H1 (cell line): ENCODE measurements at regions of chr18 and their contacts with region 1.

Region 1: GRCh38 chr18:48797841-48798255 is 152.9 kb downstream of the SMAD7 start:
- DNase-seq: no peak
- H3K4me3 ChIP-seq: no peak overlapping the region
- H3K27ac ChIP-seq: no peak overlapping the region
- H3K4me1 ChIP-seq: no peaks in the 10 kb centered on the region
- H3K27me3 ChIP-seq: no peaks in the 10 kb centered on the region; a peak in 1 of 7 replicates
- CTCF ChIP-seq: no peak
- EP300 ChIP-seq: no peak
- POLR2A ChIP-seq: no peak
- RAD21 ChIP-seq: no peak

Region 2: GRCh38 chr18:48504819-48505218 is 293.0 kb before region 1 on chr18:
- CTCF ChIA-PET with region 1: no interaction called
- POLR2A ChIA-PET with region 1: no interaction called
- DNase-seq: no peak
- H3K4me3 ChIP-seq: no peak overlapping the region
- H3K27ac ChIP-seq: no peak overlapping the region
- H3K4me1 ChIP-seq: no peaks in the 10 kb centered on the region
- H3K27me3 ChIP-seq: no peaks in the 10 kb centered on the region
- CTCF ChIP-seq: no peak
- EP300 ChIP-seq: no peak
- POLR2A ChIP-seq: no peak
- RAD21 ChIP-seq: no peak

Region 3: DNA sequence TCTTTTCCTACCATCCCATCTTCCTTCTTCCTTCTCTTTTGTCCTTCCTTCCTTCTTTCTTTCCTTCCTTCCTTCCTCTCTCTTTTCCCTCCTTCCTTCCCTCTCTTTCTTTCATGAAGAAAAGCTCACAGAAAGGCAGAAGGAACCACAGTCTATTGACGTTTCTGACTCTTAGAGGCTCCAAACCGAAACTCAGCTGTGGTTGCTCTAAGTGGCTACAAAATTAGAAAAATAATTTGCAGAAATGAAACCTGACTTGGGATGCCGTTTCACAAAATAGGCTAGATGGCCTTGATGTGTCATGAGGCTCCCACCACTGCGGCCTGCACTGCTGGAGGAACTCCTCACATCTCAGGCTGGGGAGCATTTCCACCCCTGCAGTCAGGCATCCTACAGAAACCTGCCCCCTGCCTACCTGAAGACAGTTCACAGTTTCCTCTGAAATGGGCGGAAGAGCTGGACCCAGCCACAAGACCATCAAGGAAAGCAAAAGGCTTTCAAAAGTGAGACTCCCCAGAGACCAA is 12.7 kb before region 1 on chr18:
- CTCF ChIA-PET with region 1: interaction called, 17 read pairs
- POLR2A ChIA-PET with region 1: interaction called, 3 read pairs
- DNase-seq: no peak
- H3K4me3 ChIP-seq: no peak overlapping the region
- H3K27ac ChIP-seq: no peak overlapping the region
- H3K4me1 ChIP-seq: peaks cover 0 to 5% (median 1%) of the 10 kb centered on the region in 4 experiments; a peak in 2 of 7 replicates
- H3K27me3 ChIP-seq: no peaks in the 10 kb centered on the region
- CTCF ChIP-seq: no peak
- EP300 ChIP-seq: no peak
- POLR2A ChIP-seq: no peak
- RAD21 ChIP-seq: no peak

Region 4: DNA sequence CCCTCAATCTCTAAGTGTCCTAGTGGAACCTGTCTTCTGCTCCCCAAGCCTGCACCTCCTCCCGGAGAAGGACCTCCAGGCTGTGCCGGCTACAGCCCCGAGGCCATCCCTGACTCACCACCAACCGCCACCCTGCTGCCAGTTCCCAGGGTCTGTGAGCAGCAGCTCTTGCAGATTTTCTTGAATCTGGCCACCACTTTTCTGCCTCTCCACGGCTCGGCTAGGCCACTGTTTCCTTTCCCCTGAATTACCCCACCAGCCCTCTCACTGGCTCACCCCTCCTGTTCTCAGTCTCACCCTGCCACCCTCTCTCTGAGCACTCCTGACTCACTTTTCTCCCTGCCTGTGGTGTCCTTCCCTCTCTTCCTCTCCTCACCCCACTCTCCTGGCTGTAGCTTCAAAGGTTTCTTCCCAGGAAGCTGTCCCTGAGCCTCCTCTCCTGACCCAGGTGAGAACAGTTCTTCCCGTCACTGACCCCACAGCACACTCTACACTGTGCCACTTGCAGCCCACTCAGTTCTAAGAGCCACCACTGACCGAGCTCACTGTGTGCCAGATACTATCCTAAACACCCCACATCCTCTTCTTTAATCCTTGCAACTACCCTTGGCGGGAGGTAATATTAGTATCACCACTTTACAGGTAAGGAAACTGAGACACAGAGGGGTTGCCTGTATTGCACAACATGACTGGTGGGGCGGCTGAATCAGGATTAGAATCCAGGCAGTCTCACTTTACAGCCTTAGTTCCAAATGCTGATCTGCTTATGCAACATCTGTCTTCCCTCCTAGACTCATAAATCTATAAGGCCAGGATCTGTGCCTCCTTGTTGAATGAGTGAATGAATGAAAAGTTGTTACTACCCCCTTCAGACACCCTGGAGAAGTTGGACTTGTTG is 41.3 kb after region 1 on chr18:
- CTCF ChIA-PET with region 1: no interaction called
- POLR2A ChIA-PET with region 1: no interaction called
- DNase-seq: no peak
- H3K4me3 ChIP-seq: no peak overlapping the region
- H3K27ac ChIP-seq: no peak overlapping the region
- H3K4me1 ChIP-seq: peaks cover 0 to 25% (median 10%) of the 10 kb centered on the region in 4 experiments; a peak in 6 of 7 replicates
- H3K27me3 ChIP-seq: no peaks in the 10 kb centered on the region
- CTCF ChIP-seq: no peak
- EP300 ChIP-seq: no peak
- POLR2A ChIP-seq: no peak
- RAD21 ChIP-seq: no peak